ENCODE measurements at regions of chr4 and their contacts with region 1.

Region 1: GRCh38 chr4:16001484-16001858 is 38.5 kb upstream of the FGFBP2 start:
- DNase-seq: peak; percentile 69
- ATAC-seq: peak; percentile 94
- H3K4me3 Mint-ChIP-seq: no peak overlapping the region
- H3K27ac Mint-ChIP-seq: no peak overlapping the region
- H3K4me1 Mint-ChIP-seq: no peaks in the 10 kb centered on the region
- H3K27me3 Mint-ChIP-seq: peaks cover 20% of the 10 kb centered on the region

Region 2: DNA sequence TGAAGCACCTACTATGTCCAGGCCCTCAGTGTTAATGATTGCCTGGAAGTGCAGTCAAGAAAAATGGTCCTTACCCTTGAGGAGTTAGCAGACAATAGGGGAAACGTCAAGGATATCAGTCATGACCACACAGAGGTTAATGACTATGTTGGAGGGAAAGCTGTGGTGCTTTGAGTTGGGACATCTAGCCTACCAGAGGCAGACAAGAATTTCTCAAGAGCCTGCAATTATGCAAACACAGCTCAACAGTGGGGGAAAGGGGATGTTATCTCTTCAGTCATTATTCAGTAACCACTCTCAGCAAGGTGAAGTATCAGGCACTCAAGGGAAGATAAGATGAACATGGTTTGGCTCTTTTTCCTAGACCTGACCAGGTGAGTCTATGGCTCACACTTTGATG is 56.0 kb before region 1 on chr4:
- CTCF ChIA-PET with region 1: no interaction called
- DNase-seq: no peak
- ATAC-seq: no peak
- H3K4me3 Mint-ChIP-seq: no peak overlapping the region
- H3K27ac Mint-ChIP-seq: no peak overlapping the region
- H3K4me1 Mint-ChIP-seq: peaks cover 4% of the 10 kb centered on the region
- H3K27me3 Mint-ChIP-seq: peaks cover 19% of the 10 kb centered on the region

Region 3: GRCh38 chr4:15963001-15963451 is 38.4 kb before region 1 on chr4 and contains the start of gene FGFBP2:
- CTCF ChIA-PET with region 1: interaction called, 59 read pairs
- DNase-seq: peak; percentile 87
- ATAC-seq: peak; percentile 87
- H3K4me3 Mint-ChIP-seq: peak within 1 kb of the TSS; percentile 51
- H3K27ac Mint-ChIP-seq: peak within 1 kb of the TSS; percentile 56
- H3K4me1 Mint-ChIP-seq: peaks cover 28% of the 10 kb centered on the region
- H3K27me3 Mint-ChIP-seq: peaks cover 33% of the 10 kb centered on the region
- total RNA-seq, gene FGFBP2: 2.0 to 9.0 TPM